Colonic mucosa (tissue), 4 donors: ENCODE measurements at regions of chr3 and their contacts with region 1.

Region 1: GRCh38 chr3:18179521-18179920 is 245.6 kb downstream of the SATB1 start:
- DNase-seq: no peak
- H3K4me3 ChIP-seq: no peak overlapping the region
- H3K27ac ChIP-seq: no peak overlapping the region
- H3K4me1 ChIP-seq: no peaks in the 10 kb centered on the region
- H3K27me3 ChIP-seq: no peaks in the 10 kb centered on the region
- CTCF ChIP-seq: no peak

Region 2: GRCh38 chr3:18134386-18135062 is 45.0 kb before region 1 on chr3:
- intact Hi-C with region 1: no loop called
- DNase-seq: no peak
- H3K4me3 ChIP-seq: no peak overlapping the region
- H3K27ac ChIP-seq: no peak overlapping the region
- H3K4me1 ChIP-seq: no peaks in the 10 kb centered on the region
- H3K27me3 ChIP-seq: no peaks in the 10 kb centered on the region
- CTCF ChIP-seq: no peak

Region 3: GRCh38 chr3:18208856-18209255 is 29.3 kb after region 1 on chr3:
- intact Hi-C with region 1: loop called (anchors 2 kb)
- DNase-seq: no peak
- H3K4me3 ChIP-seq: no peak overlapping the region
- H3K27ac ChIP-seq: no peak overlapping the region
- H3K4me1 ChIP-seq: no peaks in the 10 kb centered on the region
- H3K27me3 ChIP-seq: no peaks in the 10 kb centered on the region
- CTCF ChIP-seq: no peak